Activated CD4-positive, alpha-beta T cell treated with anti-CD3 and anti-CD28 coated beads for 36 hours (primary cell): ENCODE measurements at regions of chr15 and their contacts with region 1.

Region 1: DNA sequence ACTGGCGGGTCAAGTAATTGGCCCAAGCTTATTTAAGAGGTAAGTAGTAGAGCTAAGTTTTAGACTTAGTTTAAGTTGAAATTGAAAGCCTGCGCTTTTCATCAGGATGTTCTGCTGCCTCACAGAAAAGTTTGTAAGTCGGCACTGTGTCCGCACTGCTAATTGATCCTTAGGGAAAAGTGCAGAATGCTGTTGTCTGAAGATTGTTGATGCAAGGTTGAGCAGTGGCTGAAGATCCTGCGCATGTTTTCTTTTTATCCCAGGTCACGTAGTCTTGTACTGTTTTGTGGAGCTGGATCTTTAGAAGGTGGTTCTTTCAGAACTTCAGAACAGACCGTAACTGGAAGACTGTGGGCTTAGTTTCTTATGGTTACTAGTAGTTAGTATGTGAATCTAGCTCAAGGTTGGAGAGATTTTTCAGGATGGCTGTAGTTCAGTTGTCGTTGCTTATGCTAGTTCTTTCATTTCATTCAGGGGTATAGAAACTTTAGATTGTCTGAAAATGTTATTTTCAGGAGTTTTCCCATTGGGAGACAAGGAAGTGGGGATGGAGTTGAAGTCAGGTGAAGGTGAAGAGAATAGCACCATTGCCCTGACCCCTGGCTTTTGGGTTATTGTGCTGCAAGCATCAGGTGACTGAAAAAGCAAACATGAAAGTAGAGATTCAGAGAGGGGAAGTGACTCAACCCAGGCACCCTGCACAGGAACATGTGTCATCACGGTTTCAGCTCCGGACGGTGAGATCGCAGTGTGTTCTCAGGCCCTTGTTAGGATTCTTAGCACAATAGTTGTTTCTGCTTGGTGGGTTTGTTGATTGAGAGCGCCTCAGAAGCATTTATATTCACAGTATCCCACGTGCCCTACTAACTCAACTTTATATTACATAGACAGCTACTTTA is 32.8 kb downstream of the AKAP13 start:
- DNase-seq: peak; percentile 88
- ATAC-seq: peak; percentile 95
- H3K4me3 Mint-ChIP-seq: peak overlapping the region; percentile 16
- H3K27ac Mint-ChIP-seq: peak overlapping the region; percentile 77
- H3K4me1 Mint-ChIP-seq: peaks cover 79% of the 10 kb centered on the region
- H3K27me3 Mint-ChIP-seq: no peaks in the 10 kb centered on the region

Region 2: GRCh38 chr15:85073556-85074194 is 339.5 kb before region 1 on chr15:
- CTCF ChIA-PET with region 1: no interaction called
- POLR2A ChIA-PET with region 1: no interaction called
- intact Hi-C with region 1: loop called in 1 of 2 experiments (anchors 10 kb)
- DNase-seq: peak; percentile 58
- ATAC-seq: peak; percentile 100
- H3K4me3 Mint-ChIP-seq: peak overlapping the region; percentile 26
- H3K27ac Mint-ChIP-seq: peak overlapping the region; percentile 89
- H3K4me1 Mint-ChIP-seq: peaks cover 18% of the 10 kb centered on the region
- H3K27me3 Mint-ChIP-seq: no peaks in the 10 kb centered on the region

Region 3: DNA sequence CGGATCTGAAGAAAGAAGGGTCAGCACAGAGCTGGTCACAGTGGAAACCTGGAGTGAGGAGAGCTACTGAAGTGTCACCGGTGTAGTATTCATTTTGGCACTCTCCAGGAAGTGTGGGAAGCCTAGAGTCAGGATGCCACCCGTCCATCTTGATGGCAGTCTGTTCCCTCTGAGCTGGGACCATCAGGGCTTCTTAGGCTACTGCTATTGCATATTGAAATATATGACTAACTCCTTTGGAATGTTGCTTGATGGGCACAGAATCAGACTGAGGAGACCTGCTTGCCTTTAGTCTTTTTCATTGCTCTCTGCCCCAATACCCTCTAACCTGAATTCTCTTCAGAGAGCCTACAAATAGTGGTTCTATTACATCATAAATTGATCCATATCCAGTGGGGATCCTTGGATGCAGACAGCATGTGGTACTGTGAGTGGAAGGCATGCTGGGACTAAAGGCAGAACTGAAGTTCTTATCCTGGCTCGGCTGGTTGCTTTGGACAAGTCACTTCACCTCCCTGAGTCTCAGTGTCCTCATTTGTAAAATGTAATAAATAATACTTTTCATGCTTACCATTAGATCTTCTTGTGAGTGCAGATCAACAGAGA is 288.0 kb before region 1 on chr15:
- CTCF ChIA-PET with region 1: no interaction called
- POLR2A ChIA-PET with region 1: no interaction called
- intact Hi-C with region 1: no loop called
- DNase-seq: no peak
- ATAC-seq: no peak
- H3K4me3 Mint-ChIP-seq: no peak overlapping the region
- H3K27ac Mint-ChIP-seq: no peak overlapping the region
- H3K4me1 Mint-ChIP-seq: peaks cover 8% of the 10 kb centered on the region
- H3K27me3 Mint-ChIP-seq: no peaks in the 10 kb centered on the region

Region 4: GRCh38 chr15:85318048-85318731 is 95.0 kb before region 1 on chr15:
- CTCF ChIA-PET with region 1: interaction called, 6 read pairs
- POLR2A ChIA-PET with region 1: no interaction called
- intact Hi-C with region 1: loop called (anchors 5 kb)
- DNase-seq: peak; percentile 40
- ATAC-seq: peak; percentile 73
- H3K4me3 Mint-ChIP-seq: peak overlapping the region; percentile 11
- H3K27ac Mint-ChIP-seq: peak overlapping the region; percentile 33
- H3K4me1 Mint-ChIP-seq: peaks cover 53% of the 10 kb centered on the region
- H3K27me3 Mint-ChIP-seq: no peaks in the 10 kb centered on the region

Region 5: DNA sequence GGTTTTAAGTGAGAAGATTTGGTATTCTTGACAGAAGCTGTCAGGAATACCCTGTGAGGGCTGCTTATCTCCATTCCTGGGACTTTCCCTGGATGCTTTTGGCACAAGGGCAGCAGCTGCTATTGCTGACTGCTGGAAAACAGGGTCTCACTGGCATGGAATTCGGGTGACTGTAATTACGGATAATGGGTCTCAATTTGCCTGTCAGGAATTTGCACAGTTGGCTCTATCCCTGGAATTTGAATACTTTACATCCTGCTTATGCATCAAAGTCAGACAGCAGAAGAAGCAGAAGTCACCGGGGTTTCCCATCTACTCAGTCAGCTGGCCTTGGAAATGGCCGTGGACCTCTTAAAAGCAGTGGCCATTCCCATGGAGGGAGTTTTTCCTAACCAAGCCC is 58.7 kb before region 1 on chr15:
- CTCF ChIA-PET with region 1: no interaction called
- POLR2A ChIA-PET with region 1: no interaction called
- intact Hi-C with region 1: loop called in 1 of 2 experiments (anchors 1 kb)
- DNase-seq: no peak
- ATAC-seq: no peak
- H3K4me3 Mint-ChIP-seq: no peak overlapping the region
- H3K27ac Mint-ChIP-seq: no peak overlapping the region
- H3K4me1 Mint-ChIP-seq: peaks cover 10% of the 10 kb centered on the region
- H3K27me3 Mint-ChIP-seq: peaks cover 3% of the 10 kb centered on the region

Region 6: DNA sequence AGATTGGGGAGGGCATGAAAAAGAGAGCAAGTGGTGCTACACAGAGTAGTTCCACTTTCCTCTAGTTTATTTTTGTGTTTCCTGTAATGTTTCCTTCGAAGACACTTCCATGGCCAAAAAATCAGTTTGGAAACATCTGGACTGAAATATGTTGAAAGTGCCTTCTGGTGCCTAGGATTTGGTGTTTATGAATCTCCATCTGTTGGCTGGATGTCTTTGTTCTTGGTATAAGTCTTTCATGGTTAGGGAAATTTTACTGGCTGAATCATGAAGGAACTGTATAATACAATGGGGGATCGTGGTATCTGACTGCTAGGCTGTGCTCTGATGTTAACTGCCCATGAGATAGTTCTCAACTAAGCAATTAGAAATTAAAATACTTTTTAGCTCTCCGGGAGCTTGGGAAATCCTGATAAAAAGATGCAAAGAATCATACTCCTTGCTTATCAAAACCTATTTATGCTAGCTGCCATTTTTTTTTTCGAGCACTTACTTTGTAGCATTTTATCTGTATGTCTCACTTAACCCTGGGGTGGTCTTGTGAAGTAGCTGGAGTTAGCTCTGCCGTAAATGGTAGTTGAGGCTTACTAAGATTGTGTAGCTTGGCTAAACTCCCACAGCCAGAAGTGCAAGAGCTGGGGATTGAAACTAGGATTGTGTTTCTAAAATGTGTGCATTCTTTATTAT is 10.9 kb before region 1 on chr15:
- CTCF ChIA-PET with region 1: interaction called, 16 read pairs
- POLR2A ChIA-PET with region 1: no interaction called
- intact Hi-C with region 1: no loop called
- DNase-seq: no peak
- ATAC-seq: peak; percentile 68
- H3K4me3 Mint-ChIP-seq: peak overlapping the region; percentile 2
- H3K27ac Mint-ChIP-seq: peak overlapping the region; percentile 33
- H3K4me1 Mint-ChIP-seq: peaks cover 78% of the 10 kb centered on the region
- H3K27me3 Mint-ChIP-seq: no peaks in the 10 kb centered on the region

Region 7: DNA sequence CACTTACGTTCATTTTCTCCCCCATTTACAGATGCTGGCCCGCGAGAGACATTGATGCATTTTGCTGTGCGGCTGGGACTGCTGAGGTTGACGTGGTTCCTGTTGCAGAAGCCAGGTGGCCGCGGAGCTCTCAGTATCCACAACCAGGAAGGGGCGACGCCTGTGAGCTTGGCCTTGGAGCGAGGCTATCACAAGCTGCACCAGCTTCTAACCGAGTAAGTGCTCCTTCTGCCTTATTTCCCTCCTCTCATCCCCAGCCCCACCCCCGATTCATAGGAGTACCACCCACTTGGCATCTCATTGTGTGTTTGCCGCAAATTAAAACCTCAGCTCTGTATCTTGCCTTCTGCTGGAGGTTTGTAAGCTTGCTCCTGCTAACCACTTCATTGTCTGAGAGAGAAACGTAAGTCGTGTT is 130.5 kb after region 1 on chr15:
- CTCF ChIA-PET with region 1: interaction called, 6 read pairs
- POLR2A ChIA-PET with region 1: no interaction called
- intact Hi-C with region 1: loop called in 1 of 2 experiments (anchors 2 kb)
- DNase-seq: peak; percentile 60
- ATAC-seq: peak; percentile 10
- H3K4me3 Mint-ChIP-seq: peak overlapping the region; percentile 58
- H3K27ac Mint-ChIP-seq: peak overlapping the region; percentile 64
- H3K4me1 Mint-ChIP-seq: peaks cover 83% of the 10 kb centered on the region
- H3K27me3 Mint-ChIP-seq: no peaks in the 10 kb centered on the region